ENCODE measurements at regions of chr20 and their contacts with region 1.

Region 1: DNA sequence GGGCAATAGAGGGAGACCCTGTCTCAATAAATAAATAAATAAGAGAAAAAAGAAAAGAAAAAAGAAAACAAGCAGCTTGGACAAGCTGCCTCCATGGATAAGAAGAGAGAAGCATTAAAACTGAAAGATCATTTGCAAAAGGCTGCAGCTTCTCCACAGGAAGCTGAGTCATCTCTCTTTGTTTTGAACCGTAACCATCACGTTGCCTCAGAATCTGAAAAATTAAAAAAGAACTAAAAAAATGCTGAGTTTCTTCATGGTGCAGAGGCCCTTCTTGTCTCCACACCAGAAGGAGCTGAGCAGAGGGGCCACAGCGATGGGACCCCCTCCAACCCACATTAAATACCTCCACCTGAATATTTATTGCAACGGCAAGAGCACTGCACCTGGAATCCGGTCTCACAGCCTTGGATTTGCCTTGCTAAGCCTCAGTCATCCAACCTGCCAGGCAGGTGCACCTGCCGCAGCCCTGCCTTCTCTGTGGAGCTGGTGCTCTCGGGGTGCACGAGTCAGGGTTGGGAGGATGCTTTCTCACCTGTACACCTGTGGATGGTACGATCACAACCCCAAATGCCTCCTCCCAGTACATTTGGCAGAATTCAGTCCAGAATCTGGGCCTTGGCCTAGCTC is 28.1 kb downstream of the TOX2 start:
- DNase-seq: peak; percentile 53
- ATAC-seq: peak; percentile 85
- H3K4me3 Mint-ChIP-seq: peak overlapping the region; percentile 28
- H3K27ac Mint-ChIP-seq: peak overlapping the region; percentile 92
- H3K4me1 Mint-ChIP-seq: peaks cover 59% of the 10 kb centered on the region
- H3K27me3 Mint-ChIP-seq: peaks cover 51% of the 10 kb centered on the region

Region 2: GRCh38 chr20:43853174-43853803 is 89.5 kb before region 1 on chr20:
- CTCF ChIA-PET with region 1: no interaction called
- DNase-seq: no peak
- ATAC-seq: no peak
- H3K4me3 Mint-ChIP-seq: no peak overlapping the region
- H3K27ac Mint-ChIP-seq: no peak overlapping the region
- H3K4me1 Mint-ChIP-seq: no peaks in the 10 kb centered on the region
- H3K27me3 Mint-ChIP-seq: peaks cover 19% of the 10 kb centered on the region

Region 3: GRCh38 chr20:43983359-43983758 is 40.6 kb after region 1 on chr20:
- CTCF ChIA-PET with region 1: interaction called, 13 read pairs
- DNase-seq: peak; percentile 58
- ATAC-seq: peak; percentile 42
- H3K4me3 Mint-ChIP-seq: no peak overlapping the region
- H3K27ac Mint-ChIP-seq: no peak overlapping the region
- H3K4me1 Mint-ChIP-seq: peaks cover 9% of the 10 kb centered on the region
- H3K27me3 Mint-ChIP-seq: peaks cover 47% of the 10 kb centered on the region

Measured in activated CD8-positive, alpha-beta memory T cell treated with anti-CD3 and anti-CD28 coated beads, Interleukin-2, amount 10 ng/mL, durations not matched to agents 7 days and 5 days (primary cell).